Naive thymus-derived CD4-positive, alpha-beta T cell (primary cell): ENCODE measurements at regions of chr1 and their contacts with region 1.

Region 1: DNA sequence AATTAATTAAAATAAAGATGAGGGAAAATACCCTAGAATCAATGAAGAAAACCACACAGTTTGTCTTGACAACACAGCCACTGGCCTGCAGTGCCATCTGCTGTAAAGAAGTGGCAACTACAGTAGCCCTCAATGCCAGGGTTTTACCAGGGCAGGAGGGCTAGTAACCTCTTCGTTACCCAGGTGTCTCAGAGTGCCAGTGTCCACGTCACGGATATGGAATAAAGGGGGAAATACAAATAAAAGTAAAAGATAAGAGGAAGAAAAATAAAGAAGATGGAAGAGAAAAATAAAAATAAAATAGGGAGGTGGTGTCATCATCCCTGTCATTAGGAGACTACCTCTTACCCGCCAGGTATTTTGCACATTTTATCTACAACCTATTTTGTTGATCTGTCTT is 14.2 kb upstream of the SLC44A3 start:
- DNase-seq: peak in 7 of 9 donors; percentile 16 to 51 (median 39)
- ATAC-seq: peak; percentile 79
- H3K4me3 ChIP-seq: no peak overlapping the region
- H3K4me3 Mint-ChIP-seq: no peak overlapping the region
- H3K27ac ChIP-seq: no peak overlapping the region
- H3K27ac Mint-ChIP-seq: peak overlapping the region in 1 of 9 donors; percentile 55
- H3K4me1 ChIP-seq: no peaks in the 10 kb centered on the region
- H3K4me1 Mint-ChIP-seq: peaks cover 0 to 19% (median 6%) of the 10 kb centered on the region in 7 donors
- H3K27me3 ChIP-seq: no peaks in the 10 kb centered on the region
- H3K27me3 Mint-ChIP-seq: peaks cover 0 to 19% (median 9%) of the 10 kb centered on the region in 5 donors

Region 2: DNA sequence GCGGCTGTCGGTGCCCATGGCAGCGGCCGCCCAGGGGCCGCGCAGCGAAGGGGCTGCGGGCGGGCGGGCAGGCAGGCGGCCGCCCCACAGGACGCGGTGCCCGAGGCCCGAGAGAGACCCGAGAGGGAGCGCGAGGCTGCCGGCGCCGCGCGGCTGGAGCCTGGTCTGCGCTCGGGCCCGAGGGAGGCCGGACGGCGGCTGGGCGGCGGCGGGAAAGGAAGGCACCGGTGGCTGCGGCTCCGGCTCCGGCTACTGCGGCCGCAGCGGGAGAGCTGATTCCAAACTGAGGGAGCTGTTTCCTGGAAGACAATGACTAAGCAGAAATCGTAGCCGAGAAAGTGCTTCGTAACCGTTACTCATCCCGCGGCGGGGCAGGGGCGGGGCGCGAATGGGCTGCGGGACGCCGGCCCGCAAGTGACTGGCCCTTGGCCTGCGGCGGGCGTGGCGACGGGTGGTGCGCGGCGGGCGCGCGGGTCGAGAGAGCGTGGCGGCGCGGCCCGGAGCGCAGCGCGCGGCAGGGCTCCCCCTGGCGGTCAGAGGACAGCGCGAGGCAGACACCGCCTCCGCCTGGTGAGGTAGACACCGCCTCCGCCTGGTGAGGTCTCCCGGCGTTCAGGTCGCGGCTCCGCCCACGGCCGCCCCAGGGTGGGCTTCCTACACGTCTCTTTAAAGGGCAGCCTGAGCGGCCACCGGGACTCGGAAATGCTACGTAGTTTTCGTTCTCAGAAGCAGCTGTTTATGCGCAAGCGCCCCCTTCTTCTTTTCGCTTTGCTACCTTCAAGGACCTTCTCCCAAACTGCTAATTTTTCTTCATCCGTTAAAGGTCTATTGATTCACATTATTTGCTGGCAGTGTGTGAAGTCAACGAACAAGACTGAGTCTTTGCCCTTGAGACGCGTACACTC is 896.5 kb before region 1 on chr1 and contains the start of gene GCLM:
- CTCF ChIA-PET with region 1: no interaction called
- POLR2A ChIA-PET with region 1: no interaction called
- intact Hi-C with region 1: loop called in 1 of 2 experiments (anchors 5 kb)
- DNase-seq: peak; percentile 81 to 97 (median 88)
- ATAC-seq: peak; percentile 98
- H3K4me3 ChIP-seq: peak within 1 kb of the TSS; percentile 61
- H3K4me3 Mint-ChIP-seq: peak within 1 kb of the TSS; percentile 86 to 99 (median 90)
- H3K27ac ChIP-seq: peak within 1 kb of the TSS; percentile 73
- H3K27ac Mint-ChIP-seq: peak within 1 kb of the TSS; percentile 60 to 94 (median 90)
- H3K4me1 ChIP-seq: peaks cover 9 to 13% of the 10 kb centered on the region in 2 donors
- H3K4me1 Mint-ChIP-seq: peaks cover 19 to 38% (median 33%) of the 10 kb centered on the region in 7 donors
- H3K27me3 ChIP-seq: no peaks in the 10 kb centered on the region
- H3K27me3 Mint-ChIP-seq: peaks cover 0 to 30% (median 0%) of the 10 kb centered on the region in 5 donors
- total RNA-seq, gene GCLM: 6.4 to 23.8 (median 11.5) TPM

Region 3: DNA sequence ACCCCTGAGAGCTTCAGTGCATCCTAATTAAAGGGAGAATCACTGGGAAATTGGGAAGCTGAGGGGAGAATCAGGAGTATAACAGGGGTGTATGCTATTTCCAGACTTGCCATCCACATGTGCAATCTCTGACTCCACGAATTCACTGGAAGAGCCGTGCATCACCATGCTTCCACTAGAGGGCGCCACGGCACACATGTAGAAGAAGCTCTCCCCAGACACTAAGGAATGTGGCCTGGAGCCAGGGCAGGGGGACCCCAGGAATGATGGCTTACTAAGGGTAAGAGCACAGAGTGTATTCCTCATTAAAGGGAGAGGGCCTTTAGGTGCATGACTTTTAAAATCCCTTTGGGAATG is 766.4 kb before region 1 on chr1:
- CTCF ChIA-PET with region 1: interaction called, 5 read pairs
- POLR2A ChIA-PET with region 1: no interaction called
- intact Hi-C with region 1: loop called in 1 of 2 experiments (anchors 1 kb)
- DNase-seq: peak in 7 of 9 donors; percentile 10 to 57 (median 29)
- ATAC-seq: peak; percentile 37
- H3K4me3 ChIP-seq: no peak overlapping the region
- H3K4me3 Mint-ChIP-seq: no peak overlapping the region
- H3K27ac ChIP-seq: no peak overlapping the region
- H3K27ac Mint-ChIP-seq: peak overlapping the region in 1 of 9 donors; percentile 1
- H3K4me1 ChIP-seq: no peaks in the 10 kb centered on the region
- H3K4me1 Mint-ChIP-seq: peaks cover 0 to 14% (median 0%) of the 10 kb centered on the region in 7 donors
- H3K27me3 ChIP-seq: no peaks in the 10 kb centered on the region
- H3K27me3 Mint-ChIP-seq: peaks cover 20 to 49% (median 30%) of the 10 kb centered on the region in 5 donors

Region 4: DNA sequence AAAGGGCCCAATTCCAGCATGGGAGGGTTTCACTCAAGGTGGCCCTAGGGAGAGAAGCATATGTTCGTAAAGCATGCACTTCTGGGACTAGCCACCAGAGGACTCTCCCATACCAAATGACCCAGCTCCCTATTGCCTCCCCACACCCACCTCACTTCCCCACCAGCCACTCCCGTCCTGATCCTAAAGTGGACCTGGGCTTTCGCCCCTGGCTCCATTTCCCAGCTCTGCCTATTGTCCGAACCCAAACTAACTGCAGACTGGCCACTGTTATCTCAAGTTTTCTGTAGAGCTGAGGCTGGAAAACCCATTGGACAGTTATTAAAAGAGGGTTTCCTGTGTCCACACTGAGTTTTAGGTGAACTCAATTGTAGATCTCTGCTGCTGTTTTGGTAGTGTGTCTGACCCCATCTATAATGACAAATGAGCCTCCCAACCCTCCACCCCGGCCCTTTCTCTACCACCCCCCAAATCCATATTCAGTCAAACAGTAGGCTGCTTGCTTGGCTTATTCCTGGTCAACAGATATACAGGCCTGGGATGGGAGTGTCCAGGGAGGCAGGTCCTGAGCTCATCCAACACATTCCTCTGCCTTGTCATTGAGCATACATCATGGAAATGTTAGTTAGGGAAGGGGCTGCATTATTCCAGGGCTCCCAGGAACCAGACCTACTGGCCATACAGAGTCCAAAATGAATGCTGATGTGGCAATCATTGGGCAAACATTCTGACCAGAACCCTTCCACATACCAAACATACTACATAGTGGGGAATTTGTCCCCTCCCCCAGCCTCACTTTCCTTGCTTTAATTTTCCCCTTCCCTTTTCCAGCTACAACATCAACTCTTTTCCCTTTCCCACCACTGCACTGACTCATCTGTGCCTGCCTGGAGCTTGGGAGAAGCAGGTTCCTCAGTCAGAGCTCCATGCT is 744.1 kb before region 1 on chr1:
- CTCF ChIA-PET with region 1: no interaction called
- POLR2A ChIA-PET with region 1: no interaction called
- intact Hi-C with region 1: loop called (anchors 1 to 5 kb)
- DNase-seq: peak in 5 of 9 donors; percentile 11 to 31 (median 17)
- ATAC-seq: peak; percentile 78
- H3K4me3 ChIP-seq: no peak overlapping the region
- H3K4me3 Mint-ChIP-seq: no peak overlapping the region
- H3K27ac ChIP-seq: no peak overlapping the region
- H3K27ac Mint-ChIP-seq: no peak overlapping the region
- H3K4me1 ChIP-seq: no peaks in the 10 kb centered on the region
- H3K4me1 Mint-ChIP-seq: peaks cover 0 to 2% (median 0%) of the 10 kb centered on the region in 7 donors
- H3K27me3 ChIP-seq: no peaks in the 10 kb centered on the region
- H3K27me3 Mint-ChIP-seq: peaks cover 7 to 25% (median 14%) of the 10 kb centered on the region in 5 donors

Region 5: DNA sequence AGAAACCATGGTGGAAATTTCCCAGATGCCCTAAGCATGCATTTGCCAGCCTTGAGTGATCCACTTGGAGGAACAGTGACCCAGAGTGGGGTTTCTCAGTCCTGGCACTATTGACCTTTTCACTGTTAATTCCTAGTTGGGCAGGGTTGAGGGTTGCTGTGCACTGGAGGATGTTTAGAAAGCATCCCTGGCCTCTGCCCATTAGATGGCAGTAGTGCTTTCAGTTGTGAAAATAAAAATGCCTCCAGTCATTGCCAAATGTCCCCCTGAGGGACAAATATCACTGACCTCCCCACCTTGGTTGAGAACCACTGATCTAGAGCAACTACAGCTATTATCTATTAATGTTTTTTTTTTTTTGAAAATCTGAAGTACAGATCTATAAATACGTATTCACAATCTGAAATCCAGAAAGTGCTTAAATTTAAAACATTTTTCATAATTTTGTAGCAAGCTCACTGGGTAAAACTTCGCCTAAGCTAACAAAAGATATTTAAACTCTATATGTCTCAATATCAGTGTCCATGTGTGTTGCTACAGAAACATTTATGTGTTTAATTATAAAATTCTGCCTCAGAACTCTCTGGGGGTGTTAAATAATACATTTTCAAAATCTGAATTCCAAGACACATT is 291.7 kb before region 1 on chr1:
- CTCF ChIA-PET with region 1: no interaction called
- POLR2A ChIA-PET with region 1: no interaction called
- intact Hi-C with region 1: loop called (anchors 1 kb)
- DNase-seq: no peak
- ATAC-seq: no peak
- H3K4me3 ChIP-seq: no peak overlapping the region
- H3K4me3 Mint-ChIP-seq: no peak overlapping the region
- H3K27ac ChIP-seq: no peak overlapping the region
- H3K27ac Mint-ChIP-seq: no peak overlapping the region
- H3K4me1 ChIP-seq: no peaks in the 10 kb centered on the region
- H3K4me1 Mint-ChIP-seq: no peaks in the 10 kb centered on the region
- H3K27me3 ChIP-seq: no peaks in the 10 kb centered on the region
- H3K27me3 Mint-ChIP-seq: no peaks in the 10 kb centered on the region

Region 6: GRCh38 chr1:94755675-94756074 is 50.2 kb before region 1 on chr1:
- CTCF ChIA-PET with region 1: no interaction called
- POLR2A ChIA-PET with region 1: no interaction called
- intact Hi-C with region 1: no loop called
- DNase-seq: peak in 1 of 9 donors; percentile 8
- ATAC-seq: peak; percentile 26
- H3K4me3 ChIP-seq: no peak overlapping the region
- H3K4me3 Mint-ChIP-seq: peak overlapping the region in 1 of 10 donors; percentile 21
- H3K27ac ChIP-seq: no peak overlapping the region
- H3K27ac Mint-ChIP-seq: peak overlapping the region in 1 of 9 donors; percentile 53
- H3K4me1 ChIP-seq: no peaks in the 10 kb centered on the region
- H3K4me1 Mint-ChIP-seq: peaks cover 0 to 12% (median 0%) of the 10 kb centered on the region in 7 donors
- H3K27me3 ChIP-seq: no peaks in the 10 kb centered on the region
- H3K27me3 Mint-ChIP-seq: peaks cover 8 to 29% (median 21%) of the 10 kb centered on the region in 5 donors

Region 7: DNA sequence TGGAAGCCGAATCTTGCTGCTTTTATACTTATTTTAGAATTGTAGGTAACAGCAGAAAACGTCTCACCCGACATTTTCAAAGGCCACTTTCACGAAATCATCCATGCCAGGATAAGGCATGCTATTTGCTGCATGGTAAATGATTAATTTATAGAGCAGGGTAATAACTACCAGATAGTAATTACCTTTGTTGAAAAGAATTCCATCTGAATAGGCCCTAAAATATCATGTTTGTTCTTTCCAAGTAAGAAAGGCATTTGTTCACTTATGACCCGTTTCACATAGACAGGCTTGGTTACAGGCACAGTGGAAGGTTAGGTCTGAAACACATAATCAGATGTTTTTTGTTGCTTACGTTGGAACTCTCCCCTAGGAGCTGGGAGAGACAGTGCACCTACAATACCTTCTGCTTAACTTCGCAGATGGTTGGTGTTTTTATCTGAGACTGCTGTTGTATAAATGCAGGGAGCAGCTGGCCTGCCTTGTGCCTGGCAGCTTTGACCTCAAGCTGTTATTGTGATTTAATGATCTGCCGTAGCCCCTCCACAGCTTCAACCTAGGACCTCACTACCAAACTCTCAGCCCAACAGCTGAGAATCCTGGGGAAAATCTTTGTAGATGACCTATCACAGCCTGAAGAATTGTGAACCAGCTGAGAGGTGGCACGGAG is 15.9 kb after region 1 on chr1:
- CTCF ChIA-PET with region 1: no interaction called
- POLR2A ChIA-PET with region 1: no interaction called
- intact Hi-C with region 1: no loop called
- DNase-seq: no peak
- ATAC-seq: no peak
- H3K4me3 ChIP-seq: no peak overlapping the region
- H3K4me3 Mint-ChIP-seq: no peak overlapping the region
- H3K27ac ChIP-seq: no peak overlapping the region
- H3K27ac Mint-ChIP-seq: no peak overlapping the region
- H3K4me1 ChIP-seq: no peaks in the 10 kb centered on the region
- H3K4me1 Mint-ChIP-seq: peaks cover 0 to 9% (median 0%) of the 10 kb centered on the region in 7 donors
- H3K27me3 ChIP-seq: peaks cover 3 to 5% of the 10 kb centered on the region in 2 donors
- H3K27me3 Mint-ChIP-seq: peaks cover 48 to 68% (median 65%) of the 10 kb centered on the region in 5 donors

Region 8: GRCh38 chr1:95043141-95043980 is 237.4 kb after region 1 on chr1:
- CTCF ChIA-PET with region 1: interaction called, 5 read pairs
- POLR2A ChIA-PET with region 1: no interaction called
- intact Hi-C with region 1: loop called in 1 of 2 experiments (anchors 1 kb)
- DNase-seq: peak; percentile 57 to 81 (median 75)
- ATAC-seq: peak; percentile 100
- H3K4me3 ChIP-seq: no peak overlapping the region
- H3K4me3 Mint-ChIP-seq: no peak overlapping the region
- H3K27ac ChIP-seq: no peak overlapping the region
- H3K27ac Mint-ChIP-seq: no peak overlapping the region
- H3K4me1 ChIP-seq: no peaks in the 10 kb centered on the region
- H3K4me1 Mint-ChIP-seq: no peaks in the 10 kb centered on the region
- H3K27me3 ChIP-seq: no peaks in the 10 kb centered on the region
- H3K27me3 Mint-ChIP-seq: no peaks in the 10 kb centered on the region